BJ (cell line): ENCODE measurements at regions of chr17 and their contacts with region 1.

Region 1: GRCh38 chr17:5587438-5588032 is 3.2 kb upstream of the NLRP1 start:
- DNase-seq: no peak
- H3K4me3 ChIP-seq: no peak overlapping the region
- H3K27me3 ChIP-seq: no peaks in the 10 kb centered on the region
- CTCF ChIP-seq: peak; percentile 89

Region 2: GRCh38 chr17:5706577-5707216 is 119.2 kb after region 1 on chr17:
- CTCF ChIA-PET with region 1: interaction called, 48 read pairs
- POLR2A ChIA-PET with region 1: no interaction called
- DNase-seq: no peak
- H3K4me3 ChIP-seq: no peak overlapping the region
- H3K27me3 ChIP-seq: 0 out of 2 replicates have a peak, but pooled peaks cover 2% of the 10 kb centered on the region
- CTCF ChIP-seq: peak; percentile 90

Region 3: GRCh38 chr17:6421700-6422604 is 834.4 kb after region 1 on chr17:
- CTCF ChIA-PET with region 1: interaction called, 77 read pairs
- POLR2A ChIA-PET with region 1: no interaction called
- DNase-seq: no peak
- H3K4me3 ChIP-seq: no peak overlapping the region
- H3K27me3 ChIP-seq: peaks cover 4% of the 10 kb centered on the region
- CTCF ChIP-seq: peak; percentile 86

Region 4: DNA sequence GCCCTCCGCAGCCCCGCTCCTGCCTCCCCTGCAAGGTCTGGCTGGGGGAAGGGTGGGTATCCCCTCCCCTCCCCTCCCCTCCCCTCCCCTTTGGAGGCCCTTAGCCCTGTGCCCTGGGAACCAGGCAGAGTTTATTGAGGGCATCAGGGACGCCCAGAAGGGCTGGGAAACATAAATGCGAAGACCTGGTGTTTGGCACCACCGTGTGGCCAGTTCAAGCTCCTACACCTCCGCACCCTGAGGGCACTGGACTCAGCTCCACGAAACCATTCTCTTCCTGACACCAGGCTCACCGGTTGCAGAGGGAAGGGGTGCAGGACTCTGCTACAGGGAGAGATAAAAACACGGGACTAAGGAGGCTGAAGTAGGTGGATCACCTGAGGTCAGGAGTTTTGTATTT is 848.4 kb after region 1 on chr17:
- CTCF ChIA-PET with region 1: interaction called, 12 read pairs
- POLR2A ChIA-PET with region 1: no interaction called
- DNase-seq: no peak
- H3K4me3 ChIP-seq: no peak overlapping the region
- H3K27me3 ChIP-seq: peaks cover 4% of the 10 kb centered on the region
- CTCF ChIP-seq: peak; percentile 82